Common myeloid progenitor, CD34-positive (primary cell): ENCODE measurements at regions of chr19 and their contacts with region 1.

Region 1: DNA sequence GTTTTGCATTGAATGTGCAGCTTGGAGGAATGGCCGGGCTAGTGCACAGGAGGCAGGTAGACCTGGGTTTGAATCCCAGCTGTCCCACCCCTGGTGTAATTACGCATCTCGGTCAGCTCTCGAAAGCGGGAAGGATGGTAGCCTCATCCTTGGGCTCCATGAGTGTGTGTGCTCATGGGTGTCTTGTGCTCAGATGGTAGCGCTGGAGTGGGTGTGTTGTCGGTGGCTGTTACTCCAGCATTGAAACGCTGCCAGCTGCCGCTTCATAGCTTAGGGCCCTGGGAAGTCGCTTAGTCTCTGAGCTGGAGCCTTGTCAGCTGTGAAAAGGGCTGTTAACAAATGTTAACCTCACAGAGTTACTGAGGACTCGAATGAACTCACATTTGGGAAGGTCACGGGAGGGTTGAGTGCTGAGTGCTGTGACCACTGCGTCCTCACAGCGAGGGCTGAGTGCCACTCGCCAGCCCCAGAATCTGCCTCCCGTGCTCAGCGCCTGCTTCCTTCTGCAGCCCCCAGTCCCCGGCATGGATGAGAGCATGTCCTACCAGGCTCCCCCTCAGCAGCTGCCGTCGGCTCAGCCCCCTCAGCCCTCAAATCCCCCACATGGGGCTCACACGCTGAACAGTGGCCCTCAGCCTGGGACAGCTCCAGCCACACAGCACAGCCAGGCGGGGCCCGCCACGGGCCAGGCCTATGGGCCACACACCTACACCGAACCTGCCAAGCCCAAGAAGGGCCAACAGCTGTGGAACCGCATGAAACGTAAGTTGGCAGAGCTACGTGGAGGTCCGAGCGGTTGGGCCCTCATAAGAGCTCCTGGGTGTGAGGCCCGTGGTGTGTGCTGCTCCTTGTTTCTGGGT is 5.2 kb downstream of the LENG8 start:
- DNase-seq: no peak
- H3K4me3 ChIP-seq: no peak overlapping the region
- H3K27ac ChIP-seq: no peak overlapping the region
- H3K4me1 ChIP-seq: peaks cover 7 to 24% (median 14%) of the 10 kb centered on the region in 4 experiments
- H3K27me3 ChIP-seq: no peaks in the 10 kb centered on the region

Region 2: DNA sequence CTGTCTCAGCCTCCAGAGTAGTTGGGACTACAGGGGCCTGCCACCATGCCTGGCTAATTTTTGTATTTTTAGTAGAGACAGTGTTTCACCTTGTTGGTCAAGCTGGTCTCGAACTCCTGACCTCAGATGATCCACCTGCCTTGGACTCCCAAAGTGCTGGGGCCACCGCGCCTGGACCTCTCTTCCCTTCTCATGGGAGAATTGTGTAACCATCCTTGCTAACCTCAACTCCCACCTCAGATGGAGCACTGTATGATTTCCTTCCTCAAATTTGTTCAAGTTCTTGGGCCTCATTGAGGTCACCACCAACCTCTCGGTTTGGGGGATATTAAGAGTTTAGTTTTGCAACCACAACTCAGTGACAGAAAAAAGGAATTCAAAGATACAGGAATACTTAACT is 151.9 kb before region 1 on chr19:
- CTCF ChIA-PET with region 1: no interaction called
- POLR2A ChIA-PET with region 1: no interaction called
- DNase-seq: peak; percentile 71 to 88 (median 88)
- H3K4me3 ChIP-seq: no peak overlapping the region
- H3K27ac ChIP-seq: no peak overlapping the region
- H3K4me1 ChIP-seq: peaks cover 23 to 52% (median 38%) of the 10 kb centered on the region in 4 experiments
- H3K27me3 ChIP-seq: peaks cover 0 to 15% (median 7%) of the 10 kb centered on the region in 5 experiments

Region 3: GRCh38 chr19:54439174-54439853 is 14.8 kb before region 1 on chr19:
- CTCF ChIA-PET with region 1: interaction called, 23 read pairs
- POLR2A ChIA-PET with region 1: interaction called, 3 read pairs
- DNase-seq: peak; percentile 47 to 71 (median 68)
- H3K4me3 ChIP-seq: no peak overlapping the region
- H3K27ac ChIP-seq: no peak overlapping the region
- H3K4me1 ChIP-seq: peaks cover 0 to 12% (median 2%) of the 10 kb centered on the region in 4 experiments
- H3K27me3 ChIP-seq: peaks cover 0 to 4% (median 0%) of the 10 kb centered on the region in 5 experiments